Thyroid gland (tissue), 4 donors: ENCODE measurements at regions of chr12 and their contacts with region 1.

Region 1: GRCh38 chr12:15856097-15856982 is 25.8 kb upstream of the STRAP start:
- DNase-seq: peak; percentile 30 to 34
- H3K4me3 ChIP-seq: no peak overlapping the region
- H3K27ac ChIP-seq: no peak overlapping the region
- H3K4me1 ChIP-seq: peaks cover 0 to 7% of the 10 kb centered on the region in 2 donors
- H3K27me3 ChIP-seq: no peaks in the 10 kb centered on the region
- CTCF ChIP-seq: peak; percentile 37 to 94 (median 76)
- POLR2A ChIP-seq: no peak

Region 2: DNA sequence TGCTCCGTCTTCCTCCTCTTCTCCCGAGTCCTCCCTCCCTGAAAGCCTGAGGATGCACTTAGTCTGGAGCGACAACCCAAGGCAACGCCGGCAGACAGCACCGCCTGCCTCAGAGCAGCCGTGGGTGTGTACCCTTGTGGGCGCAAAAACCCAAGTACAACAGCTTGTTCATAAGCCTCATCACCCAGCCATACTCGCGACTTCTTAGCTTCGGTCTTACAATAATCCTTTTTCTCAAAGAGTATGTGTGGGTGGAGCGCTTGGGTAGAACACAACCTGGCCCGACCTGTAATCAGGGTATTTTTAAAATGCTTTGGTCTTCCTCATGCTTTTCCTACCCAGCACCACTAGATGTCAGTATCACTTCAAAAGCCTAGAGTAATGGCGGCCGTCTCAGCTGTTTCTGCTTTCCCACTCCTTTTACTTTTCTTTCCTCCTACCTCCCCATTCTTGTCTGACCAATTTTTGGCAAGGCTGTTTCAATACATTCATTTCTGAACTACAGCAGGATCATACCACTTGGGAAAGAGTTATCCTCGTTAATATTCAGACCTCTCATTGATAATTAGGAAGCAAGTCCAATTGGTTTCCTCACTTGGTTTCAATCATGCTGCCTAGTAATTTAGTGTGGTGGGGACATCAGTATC is 266.0 kb before region 1 on chr12:
- intact Hi-C with region 1: loop called (anchors 2 kb)
- DNase-seq: peak; percentile 37 to 46
- H3K4me3 ChIP-seq: no peak overlapping the region
- H3K27ac ChIP-seq: no peak overlapping the region
- H3K4me1 ChIP-seq: peaks cover 0 to 3% of the 10 kb centered on the region in 2 donors
- H3K27me3 ChIP-seq: no peaks in the 10 kb centered on the region
- CTCF ChIP-seq: peak; percentile 72 to 98 (median 91)
- POLR2A ChIP-seq: no peak

Region 3: DNA sequence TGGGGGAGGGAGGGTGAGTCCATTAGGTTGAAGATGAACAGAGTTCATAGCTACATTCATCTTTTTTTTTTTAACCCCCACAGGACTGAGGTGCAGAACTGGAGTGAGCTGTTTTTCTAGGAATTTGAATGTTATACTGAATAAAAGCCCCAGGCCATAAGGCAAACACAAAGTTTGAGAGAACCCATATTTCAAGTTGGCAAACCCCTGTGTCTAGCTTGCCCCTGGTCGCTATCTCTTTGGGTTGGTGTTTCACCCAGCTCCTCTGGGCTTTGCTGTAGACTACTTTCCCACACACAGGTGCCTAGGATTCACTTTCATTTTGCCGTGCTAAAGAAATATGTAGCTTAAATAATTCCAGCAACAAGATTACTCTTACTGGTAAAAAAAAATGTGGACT is 754.8 kb after region 1 on chr12:
- intact Hi-C with region 1: no loop called
- DNase-seq: no peak
- H3K4me3 ChIP-seq: peak overlapping the region in 2 of 3 donors; percentile 9 to 11
- H3K27ac ChIP-seq: peak overlapping the region; percentile 97 to 99 (median 97)
- H3K4me1 ChIP-seq: peaks cover 45 to 54% of the 10 kb centered on the region in 2 donors
- H3K27me3 ChIP-seq: no peaks in the 10 kb centered on the region
- CTCF ChIP-seq: no peak
- POLR2A ChIP-seq: no peak